ENCODE measurements at regions of chr18 and their contacts with region 1.

Region 1: DNA sequence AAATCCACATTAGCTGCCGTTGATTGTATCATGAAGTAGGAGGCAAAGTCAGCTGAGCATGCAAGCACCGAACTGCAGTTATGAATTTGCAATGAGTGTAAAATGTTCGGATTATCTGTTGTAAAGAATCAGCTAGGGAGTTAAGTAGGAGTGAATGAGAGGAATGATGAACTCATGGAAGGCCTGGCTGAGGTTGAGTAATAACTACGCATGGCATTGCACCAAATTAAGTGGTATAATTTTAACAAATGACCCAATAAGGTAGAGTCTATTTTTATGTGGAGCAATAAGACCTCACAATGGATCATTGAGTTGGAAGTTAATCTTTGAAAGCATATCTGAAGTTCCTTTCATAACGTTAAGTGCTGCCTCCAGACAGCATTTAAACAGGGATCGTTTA is 288.2 kb upstream of the CHST9 start:
- DNase-seq: no peak
- ATAC-seq: no peak
- H3K4me3 ChIP-seq: no peak overlapping the region
- H3K27ac ChIP-seq: no peak overlapping the region
- H3K4me1 ChIP-seq: no peaks in the 10 kb centered on the region
- H3K27me3 ChIP-seq: no peaks in the 10 kb centered on the region
- CTCF ChIP-seq: no peak
- POLR2A ChIP-seq: no peak

Region 2: DNA sequence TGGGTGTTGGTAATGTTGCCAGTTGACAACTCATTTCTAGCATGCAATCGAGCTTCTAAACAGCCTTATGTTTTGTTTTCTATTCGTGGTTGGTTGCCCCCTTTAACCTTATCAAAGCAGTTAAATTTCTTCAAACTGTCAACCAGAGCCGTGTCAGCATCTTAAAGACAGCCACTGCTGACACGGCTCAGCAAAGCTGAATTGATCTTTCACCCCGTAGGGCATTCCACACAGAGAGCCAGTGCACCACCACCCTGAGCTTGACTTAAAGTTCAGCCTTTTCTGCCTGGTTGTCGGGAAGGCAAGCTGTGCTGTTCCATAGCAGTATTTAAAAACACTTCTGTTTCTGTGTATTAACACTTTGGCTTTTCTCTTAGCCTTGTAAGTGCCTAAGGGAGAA is 66.8 kb after region 1 on chr18:
- intact Hi-C with region 1: loop called in 1 of 10 experiments (anchors 10 kb)
- DNase-seq: no peak
- ATAC-seq: no peak
- H3K4me3 ChIP-seq: no peak overlapping the region
- H3K27ac ChIP-seq: no peak overlapping the region
- H3K4me1 ChIP-seq: no peaks in the 10 kb centered on the region
- H3K27me3 ChIP-seq: no peaks in the 10 kb centered on the region
- CTCF ChIP-seq: no peak
- POLR2A ChIP-seq: no peak